Activated CD8-positive, alpha-beta memory T cell treated with anti-CD3 and anti-CD28 coated beads, Interleukin-2, amount 10 ng/mL, durations not matched to agents 7 days and 5 days (primary cell): ENCODE measurements at regions of chr1 and their contacts with region 1.

Region 1: GRCh38 chr1:42777852-42778251 is 6.9 kb upstream of the TMEM269 start:
- DNase-seq: peak; percentile 50
- ATAC-seq: peak; percentile 65
- H3K4me3 Mint-ChIP-seq: no peak overlapping the region
- H3K27ac Mint-ChIP-seq: no peak overlapping the region
- H3K4me1 Mint-ChIP-seq: peaks cover 32% of the 10 kb centered on the region
- H3K27me3 Mint-ChIP-seq: no peaks in the 10 kb centered on the region

Region 2: DNA sequence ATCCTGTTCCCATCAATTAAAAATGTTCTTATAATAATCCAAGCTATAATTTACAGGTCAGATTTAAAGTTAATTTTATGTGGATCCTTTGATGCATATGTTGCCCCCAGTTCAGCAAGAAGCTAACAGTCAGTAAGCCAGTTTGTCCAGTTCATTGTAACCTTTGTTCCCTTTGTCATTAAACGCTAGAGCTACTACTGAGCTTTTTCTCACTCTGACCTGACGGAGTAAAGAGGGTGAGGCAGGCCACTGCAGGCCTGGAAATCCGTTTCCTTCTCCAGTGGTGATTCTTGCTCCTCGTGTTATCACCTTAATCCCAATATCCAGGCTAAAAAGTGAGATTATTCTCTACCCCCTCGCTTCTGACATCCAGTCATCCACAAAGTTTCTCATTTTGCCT is 85.4 kb before region 1 on chr1:
- CTCF ChIA-PET with region 1: no interaction called
- DNase-seq: no peak
- ATAC-seq: no peak
- H3K4me3 Mint-ChIP-seq: no peak overlapping the region
- H3K27ac Mint-ChIP-seq: no peak overlapping the region
- H3K4me1 Mint-ChIP-seq: peaks cover 67% of the 10 kb centered on the region
- H3K27me3 Mint-ChIP-seq: no peaks in the 10 kb centered on the region

Region 3: GRCh38 chr1:42766741-42767509 is 10.9 kb before region 1 on chr1 and contains the starts of genes C1orf50 and P3H1:
- CTCF ChIA-PET with region 1: interaction called, 44 read pairs
- DNase-seq: peak; percentile 100
- ATAC-seq: peak; percentile 94
- H3K4me3 Mint-ChIP-seq: no peak within 1 kb of the TSS
- H3K27ac Mint-ChIP-seq: no peak within 1 kb of the TSS
- H3K4me1 Mint-ChIP-seq: peaks cover 30% of the 10 kb centered on the region
- H3K27me3 Mint-ChIP-seq: no peaks in the 10 kb centered on the region
- total RNA-seq, gene C1orf50: 4.6 to 10.3 TPM
- total RNA-seq, gene P3H1: 48.1 to 54.0 TPM

Region 4: GRCh38 chr1:42913426-42914091 is 135.7 kb after region 1 on chr1:
- CTCF ChIA-PET with region 1: interaction called, 32 read pairs
- DNase-seq: peak; percentile 76
- ATAC-seq: peak; percentile 75
- H3K4me3 Mint-ChIP-seq: no peak overlapping the region
- H3K27ac Mint-ChIP-seq: no peak overlapping the region
- H3K4me1 Mint-ChIP-seq: peaks cover 10% of the 10 kb centered on the region
- H3K27me3 Mint-ChIP-seq: peaks cover 2% of the 10 kb centered on the region